AG04449 (cell line): ENCODE measurements at regions of chr3 and their contacts with region 1.

Region 1: GRCh38 chr3:195271116-195271858 is at the start of gene XXYLT1:
- DNase-seq: no peak
- H3K4me3 ChIP-seq: peak within 1 kb of the TSS; percentile 73
- CTCF ChIP-seq: peak; percentile 99

Region 2: DNA sequence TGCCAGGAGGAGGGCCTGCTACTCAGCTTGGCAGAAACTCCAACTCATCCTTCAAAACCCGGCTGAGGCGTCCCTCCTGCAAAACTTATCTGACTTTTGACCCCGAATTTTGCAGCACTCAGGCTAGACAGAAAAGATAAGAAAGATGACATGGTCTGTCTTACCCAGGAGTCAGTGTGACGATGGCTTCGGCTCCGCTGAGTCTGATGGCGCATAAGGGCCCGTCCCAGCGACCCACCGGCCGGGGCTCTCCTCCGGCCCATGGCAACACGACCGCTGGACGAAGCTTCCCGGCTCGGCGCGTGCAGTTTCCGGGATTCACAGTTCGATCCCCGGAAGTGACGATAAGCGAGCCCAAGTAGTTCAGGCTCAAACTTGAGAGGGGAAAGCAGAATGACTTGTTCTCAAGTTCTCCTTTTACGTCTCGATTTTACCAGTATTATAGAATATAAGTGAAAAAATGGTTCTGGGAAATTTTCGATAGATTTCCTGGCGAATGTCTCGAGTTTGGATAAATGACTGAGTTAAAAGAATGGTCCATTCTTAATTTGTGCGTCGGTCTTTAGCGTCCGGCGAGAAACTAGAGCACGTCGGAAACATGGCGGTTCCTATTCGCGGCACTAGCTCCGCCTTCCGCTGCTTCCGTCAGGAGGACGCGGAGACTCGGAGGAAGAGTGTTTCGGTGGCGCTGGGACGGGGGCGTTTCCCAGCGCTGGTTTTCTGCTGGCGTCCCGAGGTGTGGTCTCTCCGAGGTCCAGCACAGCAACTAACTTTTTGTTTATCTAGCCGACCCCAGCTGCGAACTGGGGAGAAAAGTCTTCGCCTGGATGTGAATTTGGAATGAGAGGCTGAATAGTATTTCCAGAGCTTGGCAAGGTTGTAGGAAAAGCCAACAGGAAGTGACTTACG is 599.1 kb before region 1 on chr3 and contains the start of gene LSG1:
- CTCF ChIA-PET with region 1: interaction called, 61 read pairs
- POLR2A ChIA-PET with region 1: interaction called, 10 read pairs
- DNase-seq: peak; percentile 71
- H3K4me3 ChIP-seq: peak within 1 kb of the TSS; percentile 89
- CTCF ChIP-seq: no peak

Region 3: GRCh38 chr3:195182470-195182795 is 88.9 kb before region 1 on chr3:
- CTCF ChIA-PET with region 1: no interaction called
- POLR2A ChIA-PET with region 1: no interaction called
- DNase-seq: no peak
- H3K4me3 ChIP-seq: no peak overlapping the region
- CTCF ChIP-seq: no peak

Region 4: GRCh38 chr3:195259475-195260279 is 11.6 kb before region 1 on chr3:
- CTCF ChIA-PET with region 1: interaction called, 47 read pairs
- POLR2A ChIA-PET with region 1: interaction called, 3 read pairs
- DNase-seq: no peak
- H3K4me3 ChIP-seq: peak overlapping the region; percentile 75
- CTCF ChIP-seq: peak; percentile 45

Region 5: DNA sequence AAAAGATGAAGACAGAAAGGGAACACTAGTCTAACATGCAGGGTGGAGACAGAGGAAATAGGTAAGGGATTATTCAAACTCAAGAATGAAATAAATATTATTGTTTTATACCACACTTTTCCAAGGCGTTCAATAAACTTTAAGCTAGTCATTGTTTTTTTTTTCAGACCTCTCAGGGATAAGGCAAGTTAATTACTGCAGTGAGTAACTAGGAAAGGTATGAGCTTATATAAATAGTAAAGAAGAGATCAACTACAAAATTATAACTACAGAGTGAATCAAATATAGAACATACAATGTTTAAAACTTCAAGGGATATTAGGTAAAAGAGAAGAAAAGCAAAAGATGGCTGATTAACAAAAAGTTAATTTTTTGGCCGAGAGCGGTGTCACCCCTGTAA is 31.1 kb after region 1 on chr3:
- CTCF ChIA-PET with region 1: interaction called, 14 read pairs
- POLR2A ChIA-PET with region 1: interaction called, 3 read pairs
- DNase-seq: peak; percentile 4
- H3K4me3 ChIP-seq: no peak overlapping the region
- CTCF ChIP-seq: no peak

Region 6: DNA sequence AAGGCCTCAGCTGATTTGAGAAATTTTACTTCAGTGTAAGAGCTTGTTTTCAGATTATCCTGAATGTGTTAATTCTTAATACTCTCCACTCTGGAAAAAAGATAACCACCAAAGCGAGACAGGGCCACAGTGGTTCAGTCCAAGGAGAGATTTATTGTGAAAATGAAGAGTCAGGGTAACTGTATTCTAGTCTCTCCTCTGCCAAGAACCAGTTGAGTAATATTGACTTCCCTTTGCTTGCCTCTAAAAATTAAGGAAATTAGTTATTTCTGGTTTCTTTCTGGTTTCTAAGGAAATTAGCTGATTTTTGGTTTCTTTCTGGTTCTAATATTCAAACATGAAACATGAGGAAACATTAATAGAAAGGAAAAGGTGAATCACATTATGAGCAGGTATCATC is 236.9 kb after region 1 on chr3:
- CTCF ChIA-PET with region 1: interaction called, 65 read pairs
- POLR2A ChIA-PET with region 1: interaction called, 3 read pairs
- DNase-seq: no peak
- H3K4me3 ChIP-seq: no peak overlapping the region
- CTCF ChIP-seq: no peak

Region 7: GRCh38 chr3:195532834-195533233 is 261.5 kb after region 1 on chr3:
- CTCF ChIA-PET with region 1: interaction called, 492 read pairs
- POLR2A ChIA-PET with region 1: no interaction called
- DNase-seq: no peak
- H3K4me3 ChIP-seq: no peak overlapping the region
- CTCF ChIP-seq: no peak